ENCODE measurements at regions of chr21 and their contacts with region 1.

Region 1: DNA sequence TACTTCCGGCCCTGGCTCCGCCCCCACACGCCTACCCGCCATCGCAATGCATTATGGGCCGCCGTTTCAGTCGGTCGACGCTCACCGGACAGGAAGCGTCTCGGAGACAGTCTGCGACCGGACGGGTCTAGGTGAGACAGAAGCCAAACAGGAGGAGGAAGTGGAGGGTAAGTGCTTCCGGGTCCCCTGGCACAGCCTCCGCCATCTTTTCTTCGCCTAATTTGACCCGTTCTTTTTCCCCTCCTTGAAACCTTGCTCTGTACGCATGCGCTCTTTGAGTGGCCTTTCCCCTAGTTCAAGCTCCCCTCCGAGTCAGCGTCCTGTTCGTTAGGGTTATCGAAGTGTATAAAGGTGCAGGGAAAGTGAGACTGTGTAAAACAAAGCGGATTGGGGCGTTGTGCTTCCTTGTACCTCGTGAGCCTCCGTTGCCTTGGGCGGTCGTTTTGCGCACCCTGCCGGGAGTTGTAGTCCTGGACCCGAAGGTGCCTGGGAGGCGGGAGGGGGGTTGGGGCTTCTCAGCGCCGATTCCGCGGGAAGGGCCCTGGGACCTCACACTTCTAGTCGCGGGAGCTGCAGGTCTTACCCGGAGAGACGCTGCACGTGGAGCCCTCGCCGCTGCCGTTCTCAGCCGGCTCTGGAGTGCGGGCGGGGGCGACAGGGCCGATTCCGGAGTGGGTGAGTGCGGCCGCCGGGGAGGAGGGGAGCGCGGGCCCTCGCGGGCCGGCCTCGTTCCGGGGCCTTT is at the starts of genes ATP5PF and GABPA:
- DNase-seq: peak; percentile 98
- ATAC-seq: peak; percentile 87
- H3K4me3 Mint-ChIP-seq: peak within 1 kb of the TSS; percentile 100
- H3K27ac Mint-ChIP-seq: peak within 1 kb of the TSS; percentile 100
- H3K4me1 Mint-ChIP-seq: peaks cover 61% of the 10 kb centered on the region
- H3K27me3 Mint-ChIP-seq: no peaks in the 10 kb centered on the region
- CTCF ChIP-seq: no peak
- total RNA-seq, gene ATP5PF: 73.9 and 78.3 TPM in 2 replicates
- total RNA-seq, gene GABPA: 31.3 and 34.6 TPM in 2 replicates

Region 2: DNA sequence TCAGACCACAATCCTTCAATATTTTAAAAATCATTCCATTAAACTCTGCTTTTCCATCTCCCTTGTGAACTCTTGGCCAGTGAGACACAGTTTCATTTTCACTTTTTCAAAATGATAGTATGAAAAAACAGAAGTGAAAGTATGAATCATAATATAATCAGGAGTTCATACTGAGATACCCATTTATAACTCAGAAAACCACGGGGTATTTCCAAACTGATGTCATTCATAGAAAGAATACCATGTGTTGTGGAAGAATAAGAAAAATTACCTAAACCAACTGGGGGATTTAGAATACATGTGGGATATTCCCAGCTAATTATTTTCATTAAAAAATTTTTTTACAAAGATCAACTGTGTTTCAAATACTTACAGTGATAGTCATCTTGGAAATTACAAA is 277.7 kb before region 1 on chr21:
- CTCF ChIA-PET with region 1: no interaction called
- POLR2A ChIA-PET with region 1: no interaction called
- intact Hi-C with region 1: loop called (anchors 1 kb)
- DNase-seq: no peak
- ATAC-seq: peak; percentile 65
- H3K4me3 Mint-ChIP-seq: peak overlapping the region; percentile 65
- H3K27ac Mint-ChIP-seq: peak overlapping the region; percentile 87
- H3K4me1 Mint-ChIP-seq: peaks cover 66% of the 10 kb centered on the region
- H3K27me3 Mint-ChIP-seq: no peaks in the 10 kb centered on the region
- CTCF ChIP-seq: no peak

Region 3: DNA sequence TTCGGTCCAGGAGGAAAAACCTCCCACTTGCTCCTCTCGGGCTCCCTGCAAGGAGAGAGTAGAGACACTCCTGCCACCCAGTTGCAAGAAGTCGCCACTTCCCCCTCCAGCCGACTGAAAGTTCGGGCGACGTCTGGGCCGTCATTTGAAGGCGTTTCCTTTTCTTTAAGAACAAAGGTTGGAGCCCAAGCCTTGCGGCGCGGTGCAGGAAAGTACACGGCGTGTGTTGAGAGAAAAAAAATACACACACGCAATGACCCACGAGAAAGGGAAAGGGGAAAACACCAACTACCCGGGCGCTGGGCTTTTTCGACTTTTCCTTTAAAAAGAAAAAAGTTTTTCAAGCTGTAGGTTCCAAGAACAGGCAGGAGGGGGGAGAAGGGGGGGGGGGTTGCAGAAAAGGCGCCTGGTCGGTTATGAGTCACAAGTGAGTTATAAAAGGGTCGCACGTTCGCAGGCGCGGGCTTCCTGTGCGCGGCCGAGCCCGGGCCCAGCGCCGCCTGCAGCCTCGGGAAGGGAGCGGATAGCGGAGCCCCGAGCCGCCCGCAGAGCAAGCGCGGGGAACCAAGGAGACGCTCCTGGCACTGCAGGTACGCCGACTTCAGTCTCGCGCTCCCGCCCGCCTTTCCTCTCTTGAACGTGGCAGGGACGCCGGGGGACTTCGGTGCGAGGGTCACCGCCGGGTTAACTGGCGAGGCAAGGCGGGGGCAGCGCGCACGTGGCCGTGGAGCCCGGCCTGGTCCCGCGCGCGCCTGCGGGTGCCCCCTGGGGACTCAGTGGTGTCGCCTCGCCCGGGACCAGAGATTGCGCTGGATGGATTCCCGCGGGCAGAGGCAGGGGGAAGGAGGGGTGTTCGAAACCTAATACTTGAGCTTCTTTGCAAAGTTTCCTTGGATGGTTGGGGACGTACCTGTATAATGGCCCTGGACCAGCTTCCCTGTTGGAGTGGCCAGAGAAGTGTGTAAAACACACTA is 173.1 kb before region 1 on chr21:
- CTCF ChIA-PET with region 1: no interaction called
- POLR2A ChIA-PET with region 1: no interaction called
- intact Hi-C with region 1: loop called (anchors 1 kb)
- DNase-seq: peak; percentile 73
- ATAC-seq: peak; percentile 70
- H3K4me3 Mint-ChIP-seq: peak overlapping the region; percentile 92
- H3K27ac Mint-ChIP-seq: peak overlapping the region; percentile 95
- H3K4me1 Mint-ChIP-seq: peaks cover 60% of the 10 kb centered on the region
- H3K27me3 Mint-ChIP-seq: no peaks in the 10 kb centered on the region
- CTCF ChIP-seq: no peak

Region 4: GRCh38 chr21:25639551-25640201 is 95.4 kb before region 1 on chr21:
- CTCF ChIA-PET with region 1: no interaction called
- POLR2A ChIA-PET with region 1: interaction called, 4 read pairs
- intact Hi-C with region 1: loop called (anchors 1 kb)
- DNase-seq: peak; percentile 55
- ATAC-seq: peak; percentile 88
- H3K4me3 Mint-ChIP-seq: peak overlapping the region; percentile 75
- H3K27ac Mint-ChIP-seq: peak overlapping the region; percentile 63
- H3K4me1 Mint-ChIP-seq: peaks cover 17% of the 10 kb centered on the region
- H3K27me3 Mint-ChIP-seq: peaks cover 4% of the 10 kb centered on the region
- CTCF ChIP-seq: peak; percentile 16

Region 5: DNA sequence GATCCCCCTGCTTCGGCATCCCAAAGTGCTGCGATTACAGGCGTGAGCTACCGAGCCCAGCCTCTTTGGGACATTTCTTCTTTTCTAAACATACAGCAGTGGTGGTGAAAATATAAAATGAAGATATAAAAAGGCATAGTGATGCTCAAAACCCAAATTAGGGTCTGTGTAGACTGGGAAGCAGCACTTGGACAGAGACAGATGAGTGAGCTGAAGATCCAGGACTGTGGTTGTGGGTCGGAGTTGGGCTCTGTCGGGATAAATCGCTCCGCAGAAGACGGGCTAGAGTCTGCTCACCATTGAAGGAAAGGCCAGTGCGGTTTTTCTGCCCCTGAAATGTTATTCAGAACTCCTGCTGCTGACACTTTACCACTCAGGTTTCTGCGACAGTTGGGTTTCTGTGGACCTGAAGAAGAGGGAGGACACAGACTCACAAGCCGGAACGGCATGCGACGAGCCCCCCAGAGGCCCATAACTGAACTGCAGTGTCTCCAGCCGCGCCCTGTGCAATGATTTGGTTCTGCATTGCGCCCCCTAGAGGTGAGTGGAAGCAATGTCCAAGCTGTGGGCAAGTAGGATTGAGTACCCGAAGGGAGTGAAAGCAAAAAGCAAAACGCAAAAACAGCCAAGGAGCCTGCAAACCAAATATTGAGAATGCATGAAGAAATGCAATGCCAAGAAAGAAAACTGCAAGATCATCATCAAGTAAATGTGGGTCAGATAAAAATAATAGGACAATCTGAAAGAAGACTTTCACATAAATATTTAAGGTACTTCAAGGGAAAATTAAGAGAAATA is 66.3 kb after region 1 on chr21:
- CTCF ChIA-PET with region 1: no interaction called
- POLR2A ChIA-PET with region 1: interaction called, 6 read pairs
- intact Hi-C with region 1: loop called (anchors 1 kb)
- DNase-seq: peak; percentile 56
- ATAC-seq: peak; percentile 100
- H3K4me3 Mint-ChIP-seq: no peak overlapping the region
- H3K27ac Mint-ChIP-seq: no peak overlapping the region
- H3K4me1 Mint-ChIP-seq: peaks cover 6% of the 10 kb centered on the region
- H3K27me3 Mint-ChIP-seq: peaks cover 11% of the 10 kb centered on the region
- CTCF ChIP-seq: peak; percentile 55

Region 6: GRCh38 chr21:26170471-26171257 is 435.6 kb after region 1 on chr21 and contains the start of gene APP:
- CTCF ChIA-PET with region 1: interaction called, 3 read pairs
- POLR2A ChIA-PET with region 1: no interaction called
- intact Hi-C with region 1: loop called (anchors 1 kb)
- DNase-seq: peak; percentile 96
- ATAC-seq: peak; percentile 90
- H3K4me3 Mint-ChIP-seq: peak within 1 kb of the TSS; percentile 91
- H3K27ac Mint-ChIP-seq: no peak within 1 kb of the TSS
- H3K4me1 Mint-ChIP-seq: peaks cover 18% of the 10 kb centered on the region
- H3K27me3 Mint-ChIP-seq: peaks cover 8% of the 10 kb centered on the region
- CTCF ChIP-seq: peak; percentile 48
- total RNA-seq, gene APP: 28.2 and 32.1 TPM in 2 replicates